CD8-positive, alpha-beta T cell (primary cell): ENCODE measurements at regions of chr17 and their contacts with region 1.

Region 1: DNA sequence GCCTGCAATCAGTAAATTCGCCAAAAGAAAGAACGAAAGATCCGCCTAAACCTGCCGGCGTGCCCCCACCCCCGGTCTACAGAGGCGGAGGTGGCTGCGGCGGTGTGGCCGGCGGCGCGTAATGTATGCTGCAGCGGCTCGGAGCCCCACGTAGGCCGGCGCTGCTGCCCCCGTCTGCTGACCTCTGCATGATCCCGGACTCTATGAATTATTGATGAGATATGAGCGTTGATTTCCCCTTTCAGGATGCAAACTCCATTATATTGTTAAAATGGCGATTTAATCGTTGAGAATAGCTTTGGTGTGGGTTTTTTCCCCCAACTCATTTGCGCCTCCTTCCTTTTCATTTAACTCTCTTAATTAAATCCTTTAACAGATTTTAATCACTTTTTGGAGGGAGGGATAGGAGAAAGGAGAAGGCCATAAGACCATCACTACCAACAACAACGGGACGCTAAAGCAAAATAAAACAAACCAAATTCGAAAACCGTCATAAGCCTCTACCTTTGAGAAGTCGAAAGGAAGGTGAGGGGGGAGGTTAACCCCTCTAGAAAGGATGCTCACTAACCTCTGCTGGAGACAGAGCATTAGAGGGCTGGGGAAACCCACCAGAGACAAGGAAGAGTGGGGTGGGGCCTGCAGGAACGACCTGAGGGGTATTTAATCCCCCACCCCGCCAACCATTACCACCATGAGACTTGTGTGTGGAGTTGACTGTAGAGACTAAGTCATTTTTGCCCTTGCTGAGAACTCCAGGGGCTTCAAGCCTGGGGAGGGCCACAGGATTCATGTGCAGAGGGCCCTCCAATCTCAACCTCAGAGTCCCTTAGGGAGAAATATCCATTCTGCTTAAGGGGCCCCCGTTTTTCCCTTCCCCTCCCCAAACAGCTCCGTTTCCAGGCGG is 3.4 kb downstream of the HOXB3 start:
- DNase-seq: peak in 4 of 9 experiments; percentile 29 to 60 (median 48)
- ATAC-seq: peak; percentile 22
- H3K4me3 ChIP-seq: peak overlapping the region; percentile 75 to 81
- H3K4me3 Mint-ChIP-seq: peak overlapping the region; percentile 96
- H3K27ac ChIP-seq: no peak overlapping the region
- H3K27ac Mint-ChIP-seq: peak overlapping the region; percentile 2
- H3K4me1 ChIP-seq: peaks cover 27% of the 10 kb centered on the region
- H3K4me1 Mint-ChIP-seq: peaks cover 32% of the 10 kb centered on the region
- H3K27me3 ChIP-seq: peaks cover 12 to 46% of the 10 kb centered on the region in 2 experiments
- H3K27me3 Mint-ChIP-seq: peaks cover 83% of the 10 kb centered on the region
- CTCF ChIP-seq: no peak

Region 2: DNA sequence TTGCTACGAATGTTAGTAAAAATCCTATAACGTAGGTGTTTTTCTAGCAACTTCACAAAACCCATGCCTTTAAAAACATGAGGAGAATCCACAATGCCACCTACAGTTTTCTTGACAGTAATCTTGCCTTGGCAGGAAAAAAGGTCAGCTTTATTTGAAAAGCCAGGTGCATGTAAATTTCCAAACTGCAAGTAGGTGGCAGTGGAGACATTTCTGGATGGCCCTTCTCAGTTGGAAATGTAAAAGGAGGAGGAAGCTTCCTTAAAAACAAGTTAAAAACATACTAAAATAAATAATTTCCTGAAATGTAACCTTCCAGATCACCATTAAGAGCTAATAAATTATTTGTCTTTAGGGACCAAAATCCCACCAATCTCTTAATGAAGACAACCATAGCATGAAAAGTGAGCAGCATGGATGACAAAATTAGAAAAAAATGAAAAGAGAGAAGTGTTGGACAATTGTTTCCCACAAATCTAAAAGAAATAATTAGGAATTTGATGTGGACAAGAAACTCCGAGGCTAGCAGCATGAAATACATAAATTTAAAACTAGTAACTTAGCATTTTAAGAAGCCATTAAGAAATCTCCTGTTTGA is 326.8 kb before region 1 on chr17:
- CTCF ChIA-PET with region 1: interaction called, 14 read pairs
- POLR2A ChIA-PET with region 1: interaction called, 3 read pairs
- intact Hi-C with region 1: no loop called
- DNase-seq: peak in 2 of 9 experiments; percentile 10 to 23
- ATAC-seq: no peak
- H3K4me3 ChIP-seq: no peak overlapping the region
- H3K4me3 Mint-ChIP-seq: no peak overlapping the region
- H3K27ac ChIP-seq: no peak overlapping the region
- H3K27ac Mint-ChIP-seq: no peak overlapping the region
- H3K4me1 ChIP-seq: no peaks in the 10 kb centered on the region
- H3K4me1 Mint-ChIP-seq: peaks cover 9% of the 10 kb centered on the region
- H3K27me3 ChIP-seq: no peaks in the 10 kb centered on the region
- H3K27me3 Mint-ChIP-seq: no peaks in the 10 kb centered on the region
- CTCF ChIP-seq: peak; percentile 42

Region 3: GRCh38 chr17:48307814-48308411 is 278.7 kb before region 1 on chr17:
- CTCF ChIA-PET with region 1: interaction called, 19 read pairs
- POLR2A ChIA-PET with region 1: no interaction called
- intact Hi-C with region 1: no loop called
- DNase-seq: peak; percentile 13 to 71 (median 53)
- ATAC-seq: peak; percentile 87
- H3K4me3 ChIP-seq: no peak overlapping the region
- H3K4me3 Mint-ChIP-seq: no peak overlapping the region
- H3K27ac ChIP-seq: no peak overlapping the region
- H3K27ac Mint-ChIP-seq: no peak overlapping the region
- H3K4me1 ChIP-seq: no peaks in the 10 kb centered on the region
- H3K4me1 Mint-ChIP-seq: peaks cover 26% of the 10 kb centered on the region
- H3K27me3 ChIP-seq: no peaks in the 10 kb centered on the region
- H3K27me3 Mint-ChIP-seq: no peaks in the 10 kb centered on the region
- CTCF ChIP-seq: peak; percentile 90

Region 4: DNA sequence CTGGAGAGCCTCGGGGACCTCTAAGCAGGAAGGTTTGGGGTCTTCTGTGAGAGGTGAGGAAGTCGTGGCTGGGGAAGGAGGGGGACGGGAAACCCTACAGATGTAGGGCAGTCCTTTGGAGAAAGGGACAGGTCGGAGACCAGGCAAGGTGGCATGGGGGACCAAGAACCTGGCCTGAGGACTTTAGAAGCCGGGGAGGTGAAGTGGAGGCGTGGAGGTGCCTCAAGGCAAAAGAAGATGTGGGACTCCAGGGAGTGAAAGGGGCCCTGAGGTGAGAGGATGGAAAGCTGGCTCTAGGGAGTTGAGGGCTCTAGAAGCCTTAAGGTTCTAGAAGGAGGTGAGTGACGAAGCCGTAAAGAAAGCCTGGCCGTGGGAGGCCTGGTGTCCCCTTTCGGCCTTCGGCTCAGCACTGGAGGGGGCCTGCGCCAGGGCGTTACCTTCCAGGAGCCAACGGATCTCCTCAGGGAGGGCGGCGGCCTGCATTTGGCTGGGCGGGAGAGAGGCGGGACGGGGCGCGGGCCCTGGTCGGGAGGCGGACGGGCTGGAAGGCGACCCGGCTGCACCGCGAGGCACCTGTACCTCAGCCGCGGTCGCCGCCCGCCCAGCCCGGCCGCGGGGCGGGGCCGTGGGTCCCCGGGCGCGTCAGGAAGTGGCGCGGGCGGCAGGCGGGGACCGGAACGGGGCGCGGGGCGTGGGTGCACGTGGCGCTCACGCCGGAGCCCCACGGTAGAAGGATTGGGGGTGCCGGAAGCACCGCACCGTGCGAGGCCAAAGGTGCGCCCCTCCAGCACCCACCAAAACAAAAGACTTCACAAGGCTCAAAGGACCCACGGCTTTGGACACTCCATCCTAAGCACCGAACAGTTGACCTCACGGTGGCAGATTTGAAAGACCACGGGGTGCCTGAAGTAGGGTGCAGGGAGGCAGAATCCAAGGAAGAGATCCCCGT is 156.7 kb before region 1 on chr17 and contains the start of gene SKAP1:
- CTCF ChIA-PET with region 1: no interaction called
- POLR2A ChIA-PET with region 1: no interaction called
- intact Hi-C with region 1: no loop called
- DNase-seq: peak; percentile 33 to 84 (median 66)
- ATAC-seq: peak; percentile 68
- H3K4me3 ChIP-seq: peak within 1 kb of the TSS; percentile 88 to 93
- H3K4me3 Mint-ChIP-seq: peak within 1 kb of the TSS; percentile 99
- H3K27ac ChIP-seq: peak within 1 kb of the TSS; percentile 79 to 91
- H3K27ac Mint-ChIP-seq: peak within 1 kb of the TSS; percentile 99
- H3K4me1 ChIP-seq: peaks cover 63% of the 10 kb centered on the region
- H3K4me1 Mint-ChIP-seq: peaks cover 88% of the 10 kb centered on the region
- H3K27me3 ChIP-seq: no peaks in the 10 kb centered on the region
- H3K27me3 Mint-ChIP-seq: no peaks in the 10 kb centered on the region
- CTCF ChIP-seq: no peak
- total RNA-seq, gene SKAP1: 59.9 to 62.4 TPM

Region 5: GRCh38 chr17:48492401-48493298 is 94.0 kb before region 1 on chr17:
- CTCF ChIA-PET with region 1: interaction called, 61 read pairs
- POLR2A ChIA-PET with region 1: no interaction called
- intact Hi-C with region 1: no loop called
- DNase-seq: peak; percentile 49 to 80 (median 67)
- ATAC-seq: peak; percentile 96
- H3K4me3 ChIP-seq: peak overlapping the region; percentile 38 to 41
- H3K4me3 Mint-ChIP-seq: peak overlapping the region; percentile 61
- H3K27ac ChIP-seq: no peak overlapping the region
- H3K27ac Mint-ChIP-seq: no peak overlapping the region
- H3K4me1 ChIP-seq: no peaks in the 10 kb centered on the region
- H3K4me1 Mint-ChIP-seq: peaks cover 5% of the 10 kb centered on the region
- H3K27me3 ChIP-seq: peaks cover 0 to 7% of the 10 kb centered on the region in 2 experiments
- H3K27me3 Mint-ChIP-seq: peaks cover 26% of the 10 kb centered on the region
- CTCF ChIP-seq: peak; percentile 83

Region 6: DNA sequence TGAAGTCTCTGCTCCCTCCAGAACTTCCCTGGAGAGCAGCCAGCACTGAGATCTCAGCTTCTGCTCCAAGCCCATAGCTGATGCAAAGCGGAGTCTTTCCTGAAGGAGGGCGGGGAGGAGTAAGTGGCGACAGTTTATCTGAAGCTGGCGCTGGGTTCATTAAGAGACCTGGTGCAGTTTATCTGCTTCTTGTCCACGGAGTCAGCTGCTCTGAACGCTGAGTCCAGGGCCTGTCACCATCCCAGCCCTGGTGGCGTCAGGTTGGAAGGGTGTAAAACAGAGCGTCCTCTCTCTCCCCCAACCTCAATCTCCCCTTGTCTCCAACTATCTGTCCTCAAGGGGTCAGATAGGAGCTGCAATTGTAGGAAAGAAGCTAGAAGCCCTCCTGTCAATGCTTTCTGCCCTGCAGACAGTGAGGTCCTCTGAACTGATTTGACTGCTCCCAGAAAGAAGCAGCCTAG is 85.6 kb before region 1 on chr17:
- CTCF ChIA-PET with region 1: interaction called, 14 read pairs
- POLR2A ChIA-PET with region 1: no interaction called
- intact Hi-C with region 1: no loop called
- DNase-seq: peak in 1 of 9 experiments; percentile 39
- ATAC-seq: no peak
- H3K4me3 ChIP-seq: no peak overlapping the region
- H3K4me3 Mint-ChIP-seq: no peak overlapping the region
- H3K27ac ChIP-seq: no peak overlapping the region
- H3K27ac Mint-ChIP-seq: no peak overlapping the region
- H3K4me1 ChIP-seq: no peaks in the 10 kb centered on the region
- H3K4me1 Mint-ChIP-seq: peaks cover 6% of the 10 kb centered on the region
- H3K27me3 ChIP-seq: no peaks in the 10 kb centered on the region
- H3K27me3 Mint-ChIP-seq: peaks cover 8% of the 10 kb centered on the region
- CTCF ChIP-seq: no peak